Mammary epithelial cell (primary cell): ENCODE measurements at regions of chr9 and their contacts with region 1.

Region 1: GRCh38 chr9:136545966-136546698 is at the start of gene NOTCH1:
- DNase-seq: peak; percentile 96
- H3K4me3 ChIP-seq: peak within 1 kb of the TSS; percentile 73 to 98 (median 86)
- H3K27ac ChIP-seq: peak within 1 kb of the TSS; percentile 91
- H3K4me1 ChIP-seq: peaks cover 61% of the 10 kb centered on the region
- H3K27me3 ChIP-seq: no peaks in the 10 kb centered on the region
- CTCF ChIP-seq: no peak
- total RNA-seq, gene NOTCH1: 170 to 189 TPM

Region 2: DNA sequence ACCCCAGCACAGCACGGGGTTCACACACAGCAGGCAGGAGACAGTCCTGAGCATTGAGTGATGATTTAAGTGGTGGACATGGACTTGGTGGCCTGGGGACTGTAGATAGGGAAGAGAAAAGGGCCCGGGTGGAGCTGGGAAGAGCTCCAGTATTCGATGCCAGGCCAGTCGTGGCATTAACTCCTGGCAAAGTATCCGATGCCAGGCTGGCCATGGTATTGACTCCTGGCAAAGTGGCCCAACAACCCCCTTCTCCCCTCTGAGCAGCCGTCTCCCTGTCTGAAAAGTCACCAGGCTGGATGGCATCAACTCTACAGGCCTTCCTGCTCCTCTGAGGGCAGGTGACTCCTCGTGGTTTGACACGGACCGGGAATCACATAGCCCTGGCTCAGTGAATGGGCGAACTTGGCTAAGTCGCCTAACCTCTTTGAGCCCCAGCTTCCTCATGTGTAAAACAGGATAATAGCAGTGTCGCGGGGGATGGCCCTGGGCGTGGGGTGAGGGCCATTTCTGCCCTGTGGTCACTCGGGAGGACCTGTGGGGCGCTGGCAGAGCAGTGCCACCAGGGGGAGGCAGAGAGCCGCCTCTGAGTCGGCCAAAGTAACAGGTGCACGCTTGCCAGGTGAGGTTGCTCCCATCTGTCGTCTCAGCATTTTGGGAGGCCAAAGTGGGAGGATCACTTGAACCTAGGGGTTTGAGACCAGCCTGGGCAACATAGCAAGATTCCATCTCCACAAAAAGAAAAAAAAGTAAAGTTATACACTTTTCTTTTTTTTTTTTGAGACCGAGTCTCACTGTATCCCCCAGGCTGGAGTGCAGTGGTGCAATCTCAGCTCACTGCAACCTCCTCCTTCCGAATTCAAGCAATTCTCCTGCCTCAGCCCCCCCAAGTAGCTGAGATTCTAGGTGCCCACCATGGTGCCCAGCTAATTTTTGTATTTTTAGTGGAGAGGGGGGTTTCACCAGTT is 57.6 kb before region 1 on chr9:
- CTCF ChIA-PET with region 1: no interaction called
- dilution Hi-C with region 1: loop called (anchors 5 kb)
- in situ Hi-C with region 1: no loop called
- intact Hi-C with region 1: loop called (anchors 1 kb)
- DNase-seq: peak; percentile 43
- H3K4me3 ChIP-seq: no peak overlapping the region
- H3K27ac ChIP-seq: no peak overlapping the region
- H3K4me1 ChIP-seq: peaks cover 19% of the 10 kb centered on the region
- H3K27me3 ChIP-seq: no peaks in the 10 kb centered on the region
- CTCF ChIP-seq: peak; percentile 89 to 96

Region 3: GRCh38 chr9:136564379-136564988 is 18.4 kb after region 1 on chr9:
- CTCF ChIA-PET with region 1: no interaction called
- dilution Hi-C with region 1: no loop called
- in situ Hi-C with region 1: no loop called
- intact Hi-C with region 1: loop called (anchors 2 kb)
- DNase-seq: peak; percentile 39
- H3K4me3 ChIP-seq: no peak overlapping the region
- H3K27ac ChIP-seq: no peak overlapping the region
- H3K4me1 ChIP-seq: peaks cover 20% of the 10 kb centered on the region
- H3K27me3 ChIP-seq: no peaks in the 10 kb centered on the region
- CTCF ChIP-seq: no peak

Region 4: DNA sequence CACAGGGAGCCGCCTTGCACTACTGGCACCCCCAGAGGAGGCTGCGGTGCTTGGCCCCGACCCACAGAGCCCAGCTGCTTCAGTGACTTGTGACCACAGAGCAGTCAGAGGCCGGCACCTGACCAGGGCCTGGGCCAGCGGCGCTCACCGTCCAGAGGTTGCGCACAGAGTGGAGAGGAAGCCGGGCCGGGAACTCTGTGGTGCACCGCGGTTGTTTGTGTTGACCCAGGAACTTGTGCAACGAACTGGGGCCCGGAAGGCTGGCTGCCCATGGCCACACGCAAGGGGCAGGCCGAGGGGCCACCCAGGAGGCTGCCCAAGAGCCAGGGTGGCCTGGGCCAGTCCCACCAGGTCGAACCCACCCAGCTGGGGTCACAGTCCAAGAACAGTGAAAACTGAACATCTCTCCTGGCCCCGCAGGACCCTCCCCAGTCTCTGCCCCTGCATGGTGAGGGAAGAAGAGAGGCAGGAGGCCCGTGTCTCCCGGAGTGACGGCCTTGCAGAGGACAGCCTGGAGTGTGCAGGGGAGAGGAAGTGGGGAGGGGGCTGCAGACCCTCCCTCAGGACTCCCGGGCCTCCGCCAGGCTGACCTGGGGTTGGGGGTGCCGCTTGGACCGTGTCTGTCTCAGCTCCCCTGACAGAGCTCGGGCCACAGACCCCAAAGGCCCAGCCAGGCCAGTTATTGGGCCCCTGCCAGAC is 73.8 kb after region 1 on chr9:
- CTCF ChIA-PET with region 1: no interaction called
- dilution Hi-C with region 1: no loop called
- in situ Hi-C with region 1: loop called in 1 of 2 experiments (anchors 5 kb)
- intact Hi-C with region 1: loop called (anchors 1 kb)
- DNase-seq: no peak
- H3K4me3 ChIP-seq: no peak overlapping the region
- H3K27ac ChIP-seq: no peak overlapping the region
- H3K4me1 ChIP-seq: peaks cover 65% of the 10 kb centered on the region
- H3K27me3 ChIP-seq: no peaks in the 10 kb centered on the region
- CTCF ChIP-seq: no peak

Region 5: GRCh38 chr9:136671646-136672430 is 125.7 kb after region 1 on chr9:
- CTCF ChIA-PET with region 1: no interaction called
- dilution Hi-C with region 1: loop called (anchors 10 kb)
- in situ Hi-C with region 1: no loop called
- intact Hi-C with region 1: no loop called
- DNase-seq: no peak
- H3K4me3 ChIP-seq: no peak overlapping the region
- H3K27ac ChIP-seq: no peak overlapping the region
- H3K4me1 ChIP-seq: no peaks in the 10 kb centered on the region
- H3K27me3 ChIP-seq: no peaks in the 10 kb centered on the region
- CTCF ChIP-seq: peak; percentile 59 to 80